Activated CD4-positive, alpha-beta T cell treated with anti-CD3 and anti-CD28 coated beads, Interleukin-2, amount 10 ng/mL, durations not matched to agents 24 days and 14 days (primary cell): ENCODE measurements at regions of chr15 and their contacts with region 1.

Region 1: DNA sequence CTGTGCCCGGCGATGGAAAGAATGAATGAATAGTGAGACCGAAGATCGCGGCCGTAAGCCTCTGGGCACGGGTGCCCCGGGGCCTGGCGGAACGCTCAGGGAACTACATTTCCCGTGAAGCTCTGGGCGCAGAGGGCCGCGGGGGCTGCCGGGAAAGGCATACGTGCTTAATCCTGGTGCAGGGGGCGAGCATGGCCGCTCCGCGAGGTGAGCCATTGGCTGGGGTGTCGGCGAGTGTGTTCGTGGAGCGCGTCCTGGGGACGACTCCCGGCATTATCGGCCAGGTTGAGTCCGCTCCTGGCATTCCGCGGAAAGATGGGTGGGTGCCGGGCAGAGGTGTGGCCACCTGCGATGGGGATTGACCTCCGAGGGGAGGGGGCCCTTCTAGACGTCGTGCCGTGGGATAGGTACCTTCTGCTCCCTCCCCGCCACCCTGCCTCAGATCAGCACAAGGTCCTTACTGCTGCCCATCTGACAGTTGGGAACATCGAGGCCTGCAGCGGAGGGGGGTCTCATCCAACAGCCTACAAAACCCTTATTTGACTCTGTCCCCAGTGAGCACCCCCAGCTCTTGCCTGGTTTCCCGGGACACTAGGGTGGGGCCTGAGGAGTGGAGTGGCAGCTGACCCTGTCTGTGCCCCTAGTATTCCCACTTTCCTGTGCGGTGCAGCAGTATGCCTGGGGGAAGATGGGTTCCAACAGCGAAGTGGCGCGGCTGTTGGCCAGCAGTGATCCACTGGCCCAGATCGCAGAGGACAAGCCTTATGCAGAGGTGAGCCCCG is at the start of gene MPI:
- DNase-seq: peak; percentile 96
- H3K4me3 Mint-ChIP-seq: peak within 1 kb of the TSS; percentile 80
- H3K27ac Mint-ChIP-seq: peak within 1 kb of the TSS; percentile 84
- H3K4me1 Mint-ChIP-seq: peaks cover 39% of the 10 kb centered on the region
- H3K27me3 Mint-ChIP-seq: no peaks in the 10 kb centered on the region
- total RNA-seq, gene MPI: 63.9 and 64.4 TPM in 2 replicates

Region 2: GRCh38 chr15:74873036-74873755 is 16.9 kb before region 1 on chr15 and contains the start of gene SCAMP2:
- intact Hi-C with region 1: loop called (anchors 1 kb)
- DNase-seq: peak; percentile 96
- H3K4me3 Mint-ChIP-seq: peak within 1 kb of the TSS; percentile 99
- H3K27ac Mint-ChIP-seq: peak within 1 kb of the TSS; percentile 93
- H3K4me1 Mint-ChIP-seq: peaks cover 44% of the 10 kb centered on the region
- H3K27me3 Mint-ChIP-seq: no peaks in the 10 kb centered on the region
- total RNA-seq, gene SCAMP2: 89.4 and 94.8 TPM in 2 replicates

Region 3: DNA sequence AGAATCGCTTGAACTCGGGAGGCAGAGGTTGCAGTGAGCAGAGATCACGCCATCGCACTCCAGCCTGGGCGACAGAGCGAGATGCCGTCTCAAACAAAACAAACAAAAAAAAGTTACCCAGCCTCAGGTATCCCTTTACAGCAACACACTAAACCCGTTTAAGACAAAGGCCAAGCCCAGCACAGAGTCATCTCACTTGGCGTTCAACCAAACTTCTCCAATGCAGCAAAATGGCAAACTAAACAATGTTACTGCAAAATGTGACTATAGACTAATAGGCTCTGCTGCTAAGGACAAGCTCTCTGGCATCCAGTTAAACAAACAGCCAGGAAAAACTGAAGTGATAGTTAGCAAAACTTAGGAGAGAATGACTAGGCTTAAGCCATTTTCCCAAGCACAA is 23.0 kb after region 1 on chr15:
- intact Hi-C with region 1: no loop called
- DNase-seq: no peak
- H3K4me3 Mint-ChIP-seq: no peak overlapping the region
- H3K27ac Mint-ChIP-seq: no peak overlapping the region
- H3K4me1 Mint-ChIP-seq: no peaks in the 10 kb centered on the region
- H3K27me3 Mint-ChIP-seq: no peaks in the 10 kb centered on the region